Activated naive CD8-positive, alpha-beta T cell treated with anti-CD3 and anti-CD28 coated beads, Interleukin-2, amount 10 ng/mL, durations not matched to agents 7 days and 5 days (primary cell): ENCODE measurements at regions of chr1 and their contacts with region 1.

Region 1: GRCh38 chr1:10398734-10399623 is at the start of gene PGD:
- DNase-seq: peak; percentile 96
- ATAC-seq: peak; percentile 98
- H3K4me3 Mint-ChIP-seq: peak within 1 kb of the TSS; percentile 89
- H3K27ac Mint-ChIP-seq: peak within 1 kb of the TSS; percentile 78
- H3K4me1 Mint-ChIP-seq: peaks cover 21% of the 10 kb centered on the region
- H3K27me3 Mint-ChIP-seq: no peaks in the 10 kb centered on the region
- total RNA-seq, gene PGD: 67.1 to 67.3 TPM

Region 2: DNA sequence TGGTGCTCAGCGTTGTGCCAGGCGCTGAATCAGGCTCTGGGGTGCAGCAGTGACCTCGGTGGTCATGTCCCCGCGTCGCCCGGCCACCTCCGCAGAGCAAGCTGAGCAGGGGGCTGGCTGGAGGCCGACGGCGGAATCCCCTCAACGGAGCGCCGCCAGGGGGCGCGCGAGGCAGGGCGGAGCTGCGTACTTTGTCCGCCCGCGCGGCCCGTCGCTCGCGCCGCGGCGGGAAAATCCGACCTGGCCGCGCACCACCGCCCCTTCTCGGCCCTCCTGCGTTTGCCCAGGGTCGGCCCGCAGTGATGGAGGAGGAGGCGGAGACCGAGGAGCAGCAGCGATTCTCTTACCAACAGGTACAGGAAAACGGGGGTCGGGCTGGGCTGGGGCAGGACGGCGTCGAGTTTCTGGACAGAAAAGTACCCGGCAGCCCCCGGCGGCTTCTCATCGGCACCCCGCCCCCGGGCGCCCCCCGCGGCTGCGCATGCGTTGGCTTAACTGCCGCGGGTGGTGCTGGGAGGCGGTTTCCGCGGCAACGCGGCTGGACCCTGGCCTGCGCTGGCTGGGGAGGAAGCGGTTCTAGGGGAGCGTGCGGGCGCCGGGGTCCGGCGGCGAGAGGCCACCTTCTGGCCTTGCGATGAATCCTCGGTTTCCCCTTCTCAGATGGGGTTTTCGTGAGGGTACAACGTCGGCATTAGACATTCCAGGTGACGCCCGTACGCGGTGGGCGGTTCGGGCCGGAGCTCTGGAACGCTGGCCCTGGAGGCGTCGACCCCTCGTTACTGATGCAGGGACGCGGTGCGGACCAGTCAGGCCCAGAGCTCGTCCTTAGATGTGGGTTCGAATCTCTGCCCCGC is 31.5 kb after region 1 on chr1 and contains the start of gene CENPS:
- POLR2A ChIA-PET with region 1: interaction called, 13 read pairs
- DNase-seq: peak; percentile 98
- ATAC-seq: peak; percentile 88
- H3K4me3 Mint-ChIP-seq: peak within 1 kb of the TSS; percentile 92
- H3K27ac Mint-ChIP-seq: peak within 1 kb of the TSS; percentile 91
- H3K4me1 Mint-ChIP-seq: peaks cover 19% of the 10 kb centered on the region
- H3K27me3 Mint-ChIP-seq: no peaks in the 10 kb centered on the region
- total RNA-seq, gene CENPS: 10.0 to 11.5 TPM